HepG2 (cell line): ENCODE measurements at regions of chr11 and their contacts with region 1.

Region 1: DNA sequence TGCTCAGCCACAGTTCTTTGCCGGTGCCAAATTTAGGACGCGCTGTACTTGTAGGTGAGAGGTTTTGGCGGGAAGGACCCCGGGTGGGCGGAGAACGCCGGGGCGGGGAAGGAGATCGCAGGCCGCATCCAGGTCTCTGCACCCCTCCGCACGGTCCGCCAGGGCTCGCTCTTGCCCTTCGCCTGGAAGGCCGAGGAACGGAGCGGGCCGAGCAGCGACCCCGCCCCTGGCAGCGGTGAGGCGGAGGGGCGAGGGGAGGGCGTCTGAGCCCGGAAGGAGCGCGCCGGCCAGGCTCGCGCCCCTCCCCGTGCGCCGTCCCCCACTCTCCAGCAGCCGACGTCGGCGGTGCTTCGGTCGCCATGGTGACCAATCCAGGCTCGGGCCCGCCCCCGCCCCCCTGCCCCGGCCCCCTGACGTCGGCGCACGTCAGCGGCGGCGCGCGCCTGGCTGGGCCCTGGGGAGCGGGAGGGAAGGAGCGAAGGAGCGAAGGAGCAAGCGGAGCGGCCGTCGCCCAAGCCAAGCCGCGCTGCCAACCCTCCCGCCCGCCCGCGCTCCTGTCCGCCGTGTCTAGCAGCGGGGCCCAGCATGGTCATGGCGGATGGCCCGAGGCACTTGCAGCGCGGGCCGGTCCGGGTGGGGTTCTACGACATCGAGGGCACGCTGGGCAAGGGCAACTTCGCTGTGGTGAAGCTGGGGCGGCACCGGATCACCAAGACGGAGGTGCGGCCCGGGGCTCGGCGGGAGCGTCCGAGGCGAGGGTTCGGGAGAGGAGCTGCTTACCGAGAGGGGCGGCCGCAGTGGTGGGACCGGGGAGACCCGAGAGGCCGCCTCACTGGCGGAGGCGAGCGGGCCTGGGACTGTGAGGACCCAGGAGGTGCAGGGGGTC is at the start of gene SIK2:
- DNase-seq: peak; percentile 89
- ATAC-seq: peak; percentile 91
- H3K4me3 ChIP-seq: peak within 1 kb of the TSS; percentile 84 to 95 (median 90)
- H3K27ac ChIP-seq: peak within 1 kb of the TSS; percentile 87
- H3K4me1 ChIP-seq: peaks cover 60% of the 10 kb centered on the region
- H3K27me3 ChIP-seq: no peaks in the 10 kb centered on the region; a peak in 1 of 5 replicates
- CTCF ChIP-seq: peak; percentile 99
- EP300 ChIP-seq: peak in 1 of 2 experiments; percentile 28; a peak in 1 of 4 replicates
- POLR2A ChIP-seq: peak; percentile 38 to 44; a peak in 2 of 4 replicates
- RAD21 ChIP-seq: peak; percentile 100
- total RNA-seq, gene SIK2: 8.1 and 11.0 TPM in 2 replicates

Region 2: GRCh38 chr11:111631666-111632039 is 29.4 kb after region 1 on chr11:
- CTCF ChIA-PET with region 1: no interaction called
- POLR2A ChIA-PET with region 1: interaction called, 3 read pairs
- in situ Hi-C with region 1: no loop called
- intact Hi-C with region 1: loop called (anchors 1 kb)
- DNase-seq: peak; percentile 21
- ATAC-seq: no peak
- H3K4me3 ChIP-seq: no peak overlapping the region
- H3K27ac ChIP-seq: peak overlapping the region; percentile 53
- H3K4me1 ChIP-seq: peaks cover 92% of the 10 kb centered on the region
- H3K27me3 ChIP-seq: no peaks in the 10 kb centered on the region
- CTCF ChIP-seq: no peak
- EP300 ChIP-seq: no peak
- POLR2A ChIP-seq: no peak
- RAD21 ChIP-seq: no peak

Region 3: GRCh38 chr11:111694851-111695250 is 92.6 kb after region 1 on chr11:
- CTCF ChIA-PET with region 1: no interaction called
- POLR2A ChIA-PET with region 1: no interaction called
- in situ Hi-C with region 1: no loop called
- intact Hi-C with region 1: loop called (anchors 5 kb)
- DNase-seq: no peak
- ATAC-seq: no peak
- H3K4me3 ChIP-seq: no peak overlapping the region
- H3K27ac ChIP-seq: no peak overlapping the region
- H3K4me1 ChIP-seq: peaks cover 29% of the 10 kb centered on the region
- H3K27me3 ChIP-seq: no peaks in the 10 kb centered on the region
- CTCF ChIP-seq: no peak
- EP300 ChIP-seq: no peak
- POLR2A ChIP-seq: no peak
- RAD21 ChIP-seq: no peak

Region 4: DNA sequence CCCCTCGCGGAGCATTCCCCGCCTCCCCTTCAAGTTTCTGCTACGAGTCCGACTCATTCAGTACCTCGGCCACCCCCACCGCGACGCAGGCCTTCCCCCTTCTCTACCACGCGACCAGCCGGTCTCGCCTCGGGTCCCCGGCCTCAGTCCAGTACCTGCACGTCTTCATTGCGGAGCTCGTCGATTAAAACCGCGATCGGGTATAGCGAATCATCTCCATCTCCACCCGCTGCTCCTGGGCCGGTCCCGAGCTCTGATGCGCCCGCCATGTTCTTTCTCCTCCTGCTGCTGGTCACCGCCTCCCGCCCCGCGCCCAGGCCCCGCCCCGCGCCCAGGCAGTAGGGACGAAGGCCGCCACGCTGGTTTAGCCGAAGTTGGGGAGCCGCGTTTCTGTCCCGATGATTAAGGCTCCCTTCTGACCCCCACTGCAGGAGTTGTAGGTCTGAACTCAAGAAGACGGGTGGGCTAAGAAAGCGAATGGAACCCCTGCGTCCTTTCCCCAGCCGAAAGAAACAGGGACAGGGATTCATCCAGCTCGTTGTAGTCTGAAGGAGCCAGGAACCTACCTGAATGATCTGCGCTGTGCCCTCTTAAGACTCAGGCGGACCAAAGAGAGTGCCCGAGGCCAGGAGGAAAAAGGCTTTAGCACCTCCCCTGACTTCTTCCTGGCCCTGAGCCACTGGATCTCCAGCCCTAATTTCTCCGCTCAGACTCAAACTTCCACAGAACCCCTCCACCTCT is 164.0 kb after region 1 on chr11 and contains the start of gene PPP2R1B:
- CTCF ChIA-PET with region 1: no interaction called
- POLR2A ChIA-PET with region 1: interaction called, 17 read pairs
- in situ Hi-C with region 1: no loop called
- intact Hi-C with region 1: no loop called
- DNase-seq: peak; percentile 42
- ATAC-seq: peak; percentile 98
- H3K4me3 ChIP-seq: peak within 1 kb of the TSS; percentile 89 to 98 (median 93)
- H3K27ac ChIP-seq: peak within 1 kb of the TSS; percentile 94
- H3K4me1 ChIP-seq: peaks cover 38% of the 10 kb centered on the region
- H3K27me3 ChIP-seq: no peaks in the 10 kb centered on the region; a peak in 1 of 5 replicates
- CTCF ChIP-seq: no peak
- EP300 ChIP-seq: no peak
- POLR2A ChIP-seq: peak; percentile 83 to 87
- RAD21 ChIP-seq: no peak
- total RNA-seq, gene PPP2R1B: 56.8 and 93.9 TPM in 2 replicates

Region 5: DNA sequence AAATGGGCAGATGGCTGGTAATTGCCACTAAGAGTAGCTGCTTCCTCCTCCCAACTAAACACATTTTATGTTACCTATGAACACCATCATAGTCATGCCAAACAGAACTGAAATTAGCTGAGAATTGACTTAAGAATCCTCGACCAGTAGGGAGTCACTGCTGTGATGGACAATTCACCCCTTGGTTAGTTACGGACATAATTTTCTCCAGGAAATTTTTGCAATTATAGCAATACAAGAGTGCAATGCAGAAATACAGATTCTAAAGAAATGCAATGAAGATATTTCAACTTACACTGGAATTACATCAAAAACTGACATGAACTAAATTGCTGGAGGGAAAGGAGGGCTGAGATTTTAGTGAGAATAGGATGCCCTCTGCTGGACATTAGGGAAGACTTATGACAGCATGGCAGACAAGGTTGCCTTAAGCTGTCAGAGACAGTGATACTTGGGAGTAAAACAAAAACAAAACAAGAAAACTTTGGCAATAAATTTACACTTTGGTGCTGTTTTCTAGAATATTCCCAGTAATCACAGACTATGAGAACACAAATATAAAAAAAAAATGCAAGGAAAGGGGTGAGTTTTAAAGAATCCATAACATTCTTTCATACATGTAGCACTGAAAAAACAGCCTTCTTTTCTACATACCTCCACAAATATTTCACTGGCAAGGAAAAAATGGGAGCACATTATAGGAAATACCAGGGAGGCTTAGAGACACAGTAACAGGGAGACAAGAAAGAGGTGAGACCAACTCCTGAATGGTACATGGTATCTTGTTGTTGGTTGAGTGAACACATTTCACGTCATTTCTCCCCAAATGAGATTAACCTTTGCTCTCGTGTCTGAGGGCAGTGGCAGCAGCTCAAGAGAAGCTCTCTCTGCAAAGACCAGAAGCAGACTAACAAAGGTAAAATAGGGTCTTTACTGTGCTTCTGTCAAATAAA is 175.1 kb after region 1 on chr11:
- CTCF ChIA-PET with region 1: interaction called, 23 read pairs
- POLR2A ChIA-PET with region 1: interaction called, 4 read pairs
- in situ Hi-C with region 1: loop called (anchors 5 kb)
- intact Hi-C with region 1: loop called (anchors 1 kb)
- DNase-seq: peak; percentile 82
- ATAC-seq: peak; percentile 85
- H3K4me3 ChIP-seq: peak overlapping the region; percentile 17 to 62 (median 44); a peak in 4 of 6 replicates
- H3K27ac ChIP-seq: peak overlapping the region; percentile 85
- H3K4me1 ChIP-seq: peaks cover 63% of the 10 kb centered on the region
- H3K27me3 ChIP-seq: no peaks in the 10 kb centered on the region
- CTCF ChIP-seq: peak; percentile 86
- EP300 ChIP-seq: peak in 1 of 2 experiments; percentile 47; a peak in 2 of 4 replicates
- POLR2A ChIP-seq: 0 out of 4 replicates have a peak, but pooled peaks of 1 of the 2 experiments have one; percentile 39
- RAD21 ChIP-seq: peak; percentile 69